ENCODE measurements at regions of chrX and their contacts with region 1.

Region 1: GRCh38 chrX:12814420-12814819 is 23.2 kb downstream of the PRPS2 start:
- DNase-seq: peak; percentile 40
- H3K4me3 ChIP-seq: no peak overlapping the region
- H3K27ac ChIP-seq: no peak overlapping the region
- H3K4me1 ChIP-seq: peaks cover 8% of the 10 kb centered on the region
- H3K27me3 ChIP-seq: no peaks in the 10 kb centered on the region
- CTCF ChIP-seq: peak; percentile 49 to 69

Region 2: GRCh38 chrX:12894074-12895030 is 79.9 kb after region 1 on chrX:
- CTCF ChIA-PET with region 1: no interaction called
- dilution Hi-C with region 1: no loop called
- in situ Hi-C with region 1: no loop called
- intact Hi-C with region 1: loop called (anchors 1 kb)
- DNase-seq: no peak
- H3K4me3 ChIP-seq: no peak overlapping the region
- H3K27ac ChIP-seq: no peak overlapping the region
- H3K4me1 ChIP-seq: peaks cover 3% of the 10 kb centered on the region
- H3K27me3 ChIP-seq: peaks cover 7% of the 10 kb centered on the region
- CTCF ChIP-seq: peak; percentile 48 to 86

Region 3: DNA sequence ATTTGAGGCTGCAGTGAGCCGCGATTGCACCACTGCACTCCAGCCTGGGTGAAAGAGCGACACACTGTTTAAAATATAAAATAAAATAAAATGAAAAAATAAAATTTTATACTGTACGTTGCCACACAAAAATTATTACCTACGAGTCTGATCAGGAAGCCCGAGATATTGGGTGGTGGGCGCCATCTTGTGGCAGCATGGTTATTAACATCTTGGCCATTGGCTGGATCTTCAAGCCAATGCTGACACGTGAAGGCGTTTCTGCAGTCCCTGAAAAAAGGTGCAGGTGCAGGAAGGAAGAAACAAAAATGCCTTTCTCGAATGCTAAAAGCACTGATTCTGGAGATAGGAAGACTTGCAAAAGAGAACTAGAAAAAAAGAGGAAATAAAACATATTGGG is 87.1 kb after region 1 on chrX:
- CTCF ChIA-PET with region 1: no interaction called
- dilution Hi-C with region 1: no loop called
- in situ Hi-C with region 1: loop called in 1 of 2 experiments (anchors 5 kb)
- intact Hi-C with region 1: loop called (anchors 1 kb)
- DNase-seq: peak; percentile 48
- H3K4me3 ChIP-seq: no peak overlapping the region
- H3K27ac ChIP-seq: no peak overlapping the region
- H3K4me1 ChIP-seq: no peaks in the 10 kb centered on the region
- H3K27me3 ChIP-seq: no peaks in the 10 kb centered on the region
- CTCF ChIP-seq: peak; percentile 79

Region 4: GRCh38 chrX:13506574-13506973 is 692.2 kb after region 1 on chrX:
- CTCF ChIA-PET with region 1: no interaction called
- dilution Hi-C with region 1: no loop called
- in situ Hi-C with region 1: no loop called
- intact Hi-C with region 1: loop called (anchors 5 kb)
- DNase-seq: peak; percentile 18
- H3K4me3 ChIP-seq: no peak overlapping the region
- H3K27ac ChIP-seq: no peak overlapping the region
- H3K4me1 ChIP-seq: no peaks in the 10 kb centered on the region
- H3K27me3 ChIP-seq: no peaks in the 10 kb centered on the region
- CTCF ChIP-seq: peak; percentile 82 to 83

Measured in mammary epithelial cell (primary cell).